Sigmoid colon (tissue), 7 donors: ENCODE measurements at regions of chr7 and their contacts with region 1.

Region 1: GRCh38 chr7:71348821-71349681 is 217.1 kb downstream of the GALNT17 start:
- DNase-seq: no peak
- H3K4me3 ChIP-seq: peak overlapping the region in 3 of 4 donors; percentile 9 to 26 (median 25)
- H3K27ac ChIP-seq: peak overlapping the region; percentile 39 to 73 (median 60)
- H3K4me1 ChIP-seq: peaks cover 0 to 26% (median 9%) of the 10 kb centered on the region in 4 donors
- H3K27me3 ChIP-seq: no peaks in the 10 kb centered on the region
- CTCF ChIP-seq: peak in 1 of 4 experiments; percentile 20
- EP300 ChIP-seq: peak in 2 of 4 donors; percentile 56 to 65
- POLR2A ChIP-seq: no peak

Region 2: GRCh38 chr7:71272509-71273490 is 76.3 kb before region 1 on chr7:
- intact Hi-C with region 1: loop called (anchors 5 kb)
- DNase-seq: no peak
- H3K4me3 ChIP-seq: no peak overlapping the region
- H3K27ac ChIP-seq: peak overlapping the region; percentile 66 to 83 (median 79)
- H3K4me1 ChIP-seq: peaks cover 0 to 79% (median 60%) of the 10 kb centered on the region in 4 donors
- H3K27me3 ChIP-seq: no peaks in the 10 kb centered on the region
- CTCF ChIP-seq: peak in 2 of 4 experiments; percentile 11 to 30
- EP300 ChIP-seq: no peak
- POLR2A ChIP-seq: no peak